AG04450 (cell line): ENCODE measurements at regions of chr5 and their contacts with region 1.

Region 1: GRCh38 chr5:150082374-150082773 is 4.0 kb downstream of the CSF1R start:
- DNase-seq: no peak
- H3K4me3 ChIP-seq: no peak overlapping the region
- H3K27ac ChIP-seq: no peak overlapping the region
- H3K27me3 ChIP-seq: peaks cover 7% of the 10 kb centered on the region
- CTCF ChIP-seq: no peak

Region 2: DNA sequence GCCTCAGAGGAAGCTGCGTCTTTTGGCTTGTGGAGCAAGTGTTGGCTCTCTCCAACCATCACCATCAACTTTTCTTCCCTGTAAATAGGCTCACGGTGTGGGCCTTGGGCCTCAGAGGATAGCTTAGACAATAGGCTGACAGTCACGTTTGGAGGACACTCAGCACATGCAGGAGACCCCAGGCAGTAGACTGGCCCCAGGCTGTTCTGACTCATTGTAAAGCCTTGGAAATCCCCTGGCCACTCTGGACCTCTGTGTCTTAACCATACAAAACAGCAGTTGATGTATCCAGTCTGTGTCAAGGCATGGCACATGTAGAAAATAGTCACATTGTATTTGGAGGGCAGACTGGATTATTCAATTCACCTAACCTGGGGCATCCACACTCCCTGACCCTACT is 311.8 kb after region 1 on chr5:
- CTCF ChIA-PET with region 1: no interaction called
- POLR2A ChIA-PET with region 1: no interaction called
- DNase-seq: peak; percentile 16
- H3K4me3 ChIP-seq: no peak overlapping the region
- H3K27ac ChIP-seq: peak overlapping the region; percentile 47
- H3K27me3 ChIP-seq: no peaks in the 10 kb centered on the region
- CTCF ChIP-seq: no peak

Region 3: GRCh38 chr5:151150471-151151262 is 1068.3 kb after region 1 on chr5:
- CTCF ChIA-PET with region 1: no interaction called
- POLR2A ChIA-PET with region 1: interaction called, 13 read pairs
- DNase-seq: no peak
- H3K4me3 ChIP-seq: no peak overlapping the region
- H3K27ac ChIP-seq: peak overlapping the region; percentile 73
- H3K27me3 ChIP-seq: no peaks in the 10 kb centered on the region
- CTCF ChIP-seq: no peak